ENCODE measurements at regions of chrX and their contacts with region 1.

Region 1: DNA sequence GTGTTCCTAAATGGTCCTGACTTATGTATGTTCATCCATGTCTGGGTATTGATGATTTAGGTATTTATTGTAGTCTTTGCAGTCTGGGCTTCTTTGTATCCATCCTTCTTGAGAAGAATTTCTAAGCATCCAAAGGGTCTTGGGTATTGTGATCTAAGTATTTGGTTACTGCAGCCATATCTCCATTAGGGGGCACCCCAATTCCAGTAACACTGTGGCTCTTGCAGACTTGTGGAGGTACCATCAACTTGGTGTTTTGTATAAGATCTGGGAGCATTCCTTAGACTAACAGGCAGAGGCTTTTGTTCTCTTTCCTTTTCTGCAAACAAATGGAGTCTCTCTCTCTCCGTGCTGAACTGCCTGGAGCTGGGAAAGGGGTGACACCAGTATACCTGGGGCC is 113.7 kb upstream of the NEXMIF start:
- DNase-seq: no peak
- H3K4me3 ChIP-seq: no peak overlapping the region
- H3K27ac ChIP-seq: no peak overlapping the region
- H3K4me1 ChIP-seq: no peaks in the 10 kb centered on the region
- H3K27me3 ChIP-seq: no peaks in the 10 kb centered on the region
- CTCF ChIP-seq: no peak
- EP300 ChIP-seq: no peak
- POLR2A ChIP-seq: no peak

Region 2: DNA sequence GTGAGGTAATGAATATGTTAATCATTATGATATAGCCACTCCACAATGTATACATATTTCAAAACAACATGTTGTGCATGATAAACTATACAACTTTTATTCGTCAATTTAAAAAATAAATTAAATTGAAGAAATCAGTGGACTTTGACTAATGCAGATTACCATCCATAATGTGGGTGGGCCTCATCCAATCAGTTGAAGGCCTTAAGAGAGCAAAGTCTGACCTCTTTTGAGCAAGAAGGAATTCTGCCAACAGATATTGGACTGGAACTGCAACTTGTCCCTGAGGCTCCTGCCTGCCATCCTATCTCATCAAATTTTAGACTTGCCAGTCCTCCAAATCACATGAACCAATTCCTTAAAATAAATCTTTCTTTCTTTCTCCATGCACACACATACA is 675.0 kb before region 1 on chrX:
- in situ Hi-C with region 1: no loop called
- intact Hi-C with region 1: no loop called
- DNase-seq: no peak
- H3K4me3 ChIP-seq: no peak overlapping the region
- H3K27ac ChIP-seq: no peak overlapping the region
- H3K4me1 ChIP-seq: no peaks in the 10 kb centered on the region
- H3K27me3 ChIP-seq: no peaks in the 10 kb centered on the region
- CTCF ChIP-seq: no peak
- EP300 ChIP-seq: no peak
- POLR2A ChIP-seq: no peak

Region 3: GRCh38 chrX:74924449-74925225 is 114.3 kb before region 1 on chrX:
- in situ Hi-C with region 1: loop called in 1 of 4 experiments (anchors 25 kb)
- intact Hi-C with region 1: no loop called
- DNase-seq: peak; percentile 54
- H3K4me3 ChIP-seq: peak overlapping the region; percentile 38 to 62 (median 47)
- H3K27ac ChIP-seq: peak overlapping the region; percentile 79 to 83 (median 82)
- H3K4me1 ChIP-seq: peaks cover 0 to 8% (median 4%) of the 10 kb centered on the region in 4 donors
- H3K27me3 ChIP-seq: no peaks in the 10 kb centered on the region
- CTCF ChIP-seq: peak in 1 of 5 experiments; percentile 17
- EP300 ChIP-seq: no peak
- POLR2A ChIP-seq: no peak